ENCODE measurements at regions of chr7 and their contacts with region 1.

Region 1: GRCh38 chr7:39580149-39580874 is 14.1 kb downstream of the YAE1 start:
- DNase-seq: peak; percentile 66
- ATAC-seq: peak; percentile 92

Region 2: GRCh38 chr7:39069896-39070881 is 510.1 kb before region 1 on chr7:
- intact Hi-C with region 1: no loop called
- DNase-seq: no peak
- ATAC-seq: no peak

Region 3: GRCh38 chr7:39746103-39746819 is 165.9 kb after region 1 on chr7:
- intact Hi-C with region 1: loop called (anchors 2 kb)
- DNase-seq: peak; percentile 78
- ATAC-seq: peak; percentile 92